PC-3 (cell line): ENCODE measurements at regions of chr11 and their contacts with region 1.

Region 1: DNA sequence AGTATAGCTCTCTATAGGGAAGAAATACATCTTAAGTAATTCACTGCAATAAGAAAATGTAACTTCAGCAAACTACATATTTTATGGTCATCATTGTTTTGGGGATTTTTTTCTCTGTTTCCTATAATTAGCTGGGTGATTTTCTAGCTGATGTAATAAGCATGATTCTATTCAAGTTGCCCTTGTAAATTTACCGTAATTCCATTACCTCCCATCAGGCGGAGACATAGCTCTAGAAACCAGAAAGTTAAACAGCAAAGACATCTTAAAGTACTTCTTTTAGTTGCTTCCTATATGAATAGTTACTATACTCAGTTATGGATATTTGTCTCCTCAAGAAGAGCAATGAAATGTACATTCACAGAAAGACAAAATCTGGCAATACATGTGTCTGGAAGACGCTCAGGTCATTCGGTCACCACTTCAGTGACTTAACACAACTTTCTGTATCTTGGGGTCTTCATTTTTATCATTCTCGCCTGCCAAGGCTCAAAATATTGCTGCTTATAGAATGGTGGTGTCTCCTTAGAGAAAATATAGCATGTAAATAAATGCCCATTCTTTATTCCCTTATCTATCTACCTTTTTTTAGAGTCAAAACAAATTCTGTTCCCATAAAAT is 239.9 kb upstream of the ZC3H12C start:
- DNase-seq: peak; percentile 88
- ATAC-seq: peak; percentile 57
- H3K4me3 ChIP-seq: no peak overlapping the region
- H3K27ac ChIP-seq: no peak overlapping the region
- H3K4me1 ChIP-seq: peaks cover 12% of the 10 kb centered on the region
- H3K27me3 ChIP-seq: no peaks in the 10 kb centered on the region
- CTCF ChIP-seq: peak; percentile 94

Region 2: DNA sequence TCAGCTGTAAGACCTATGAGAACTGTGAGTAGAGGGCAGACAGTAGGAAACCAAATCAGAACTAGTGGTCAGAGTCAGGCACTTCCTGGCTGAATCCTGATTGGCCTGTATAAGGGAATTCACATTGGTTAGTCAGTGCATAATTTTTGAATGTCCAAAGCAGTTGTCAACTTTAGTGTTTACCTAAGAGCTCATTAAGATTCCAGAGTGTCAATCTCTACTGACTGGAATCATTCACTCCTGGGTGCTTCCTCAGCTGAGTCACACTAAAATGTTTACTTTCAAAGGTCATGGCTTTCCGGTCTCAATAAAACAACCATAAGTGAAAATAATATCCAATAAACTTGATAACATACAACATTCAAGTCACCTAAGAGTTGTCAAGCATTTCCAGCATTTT is 125.2 kb before region 1 on chr11:
- CTCF ChIA-PET with region 1: no interaction called
- POLR2A ChIA-PET with region 1: no interaction called
- intact Hi-C with region 1: loop called (anchors 5 kb)
- DNase-seq: peak; percentile 94
- ATAC-seq: peak; percentile 97
- H3K4me3 ChIP-seq: no peak overlapping the region
- H3K27ac ChIP-seq: peak overlapping the region; percentile 12; the same call in 1 of the 2 replicates
- H3K4me1 ChIP-seq: peaks cover 15% of the 10 kb centered on the region
- H3K27me3 ChIP-seq: no peaks in the 10 kb centered on the region
- CTCF ChIP-seq: no peak

Region 3: GRCh38 chr11:109828387-109828786 is 24.9 kb before region 1 on chr11:
- CTCF ChIA-PET with region 1: no interaction called
- POLR2A ChIA-PET with region 1: no interaction called
- intact Hi-C with region 1: no loop called
- DNase-seq: no peak
- ATAC-seq: no peak
- H3K4me3 ChIP-seq: no peak overlapping the region
- H3K27ac ChIP-seq: no peak overlapping the region
- H3K4me1 ChIP-seq: no peaks in the 10 kb centered on the region
- H3K27me3 ChIP-seq: peaks cover 46% of the 10 kb centered on the region
- CTCF ChIP-seq: no peak

Region 4: DNA sequence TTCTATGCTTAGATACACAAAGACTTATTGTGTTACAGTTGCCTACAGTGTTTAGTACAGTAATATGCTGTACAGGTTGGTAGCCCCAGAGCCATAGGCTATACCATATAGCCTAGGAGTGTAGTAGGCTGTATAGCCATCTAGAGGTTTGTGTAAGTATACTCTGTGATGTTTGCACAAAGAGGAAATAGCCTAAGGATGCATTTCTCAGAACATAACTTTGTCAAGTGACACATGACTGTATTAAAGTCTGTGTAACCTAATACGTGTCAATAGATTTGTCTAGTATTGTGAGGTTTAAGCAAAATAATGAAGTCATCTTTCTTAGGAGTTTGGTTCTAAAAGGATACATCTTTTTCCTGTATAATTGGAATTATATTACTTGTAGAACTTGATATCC is 245.4 kb after region 1 on chr11:
- CTCF ChIA-PET with region 1: no interaction called
- POLR2A ChIA-PET with region 1: no interaction called
- intact Hi-C with region 1: loop called (anchors 5 kb)
- DNase-seq: peak; percentile 85
- ATAC-seq: peak; percentile 72
- H3K4me3 ChIP-seq: no peak overlapping the region
- H3K27ac ChIP-seq: peak overlapping the region; percentile 32
- H3K4me1 ChIP-seq: peaks cover 52% of the 10 kb centered on the region
- H3K27me3 ChIP-seq: no peaks in the 10 kb centered on the region
- CTCF ChIP-seq: peak; percentile 51

Region 5: GRCh38 chr11:110376711-110377324 is 523.6 kb after region 1 on chr11:
- CTCF ChIA-PET with region 1: no interaction called
- POLR2A ChIA-PET with region 1: no interaction called
- intact Hi-C with region 1: loop called (anchors 1 kb)
- DNase-seq: peak; percentile 91
- ATAC-seq: peak; percentile 84
- H3K4me3 ChIP-seq: peak overlapping the region; percentile 65
- H3K27ac ChIP-seq: 0 out of 2 replicates have a peak overlapping the region, but pooled peaks have one; percentile 9
- H3K4me1 ChIP-seq: peaks cover 21% of the 10 kb centered on the region
- H3K27me3 ChIP-seq: no peaks in the 10 kb centered on the region
- CTCF ChIP-seq: peak; percentile 98